Natural killer cell (primary cell): ENCODE measurements at regions of chr1 and their contacts with region 1.

Region 1: GRCh38 chr1:153677718-153678505 is 576 bp upstream of the NPR1 start:
- DNase-seq: peak; percentile 24 to 75
- ATAC-seq: peak; percentile 52 to 75 (median 66)
- H3K4me3 ChIP-seq: peak overlapping the region; percentile 8
- H3K4me3 Mint-ChIP-seq: peak overlapping the region; percentile 85
- H3K27ac ChIP-seq: no peak overlapping the region
- H3K27ac Mint-ChIP-seq: no peak overlapping the region
- H3K4me1 ChIP-seq: peaks cover 20% of the 10 kb centered on the region
- H3K4me1 Mint-ChIP-seq: peaks cover 21 to 26% of the 10 kb centered on the region in 2 donors
- H3K27me3 ChIP-seq: peaks cover 18% of the 10 kb centered on the region
- H3K27me3 Mint-ChIP-seq: peaks cover 38 to 48% of the 10 kb centered on the region in 2 donors
- CTCF ChIP-seq: peak; percentile 70

Region 2: DNA sequence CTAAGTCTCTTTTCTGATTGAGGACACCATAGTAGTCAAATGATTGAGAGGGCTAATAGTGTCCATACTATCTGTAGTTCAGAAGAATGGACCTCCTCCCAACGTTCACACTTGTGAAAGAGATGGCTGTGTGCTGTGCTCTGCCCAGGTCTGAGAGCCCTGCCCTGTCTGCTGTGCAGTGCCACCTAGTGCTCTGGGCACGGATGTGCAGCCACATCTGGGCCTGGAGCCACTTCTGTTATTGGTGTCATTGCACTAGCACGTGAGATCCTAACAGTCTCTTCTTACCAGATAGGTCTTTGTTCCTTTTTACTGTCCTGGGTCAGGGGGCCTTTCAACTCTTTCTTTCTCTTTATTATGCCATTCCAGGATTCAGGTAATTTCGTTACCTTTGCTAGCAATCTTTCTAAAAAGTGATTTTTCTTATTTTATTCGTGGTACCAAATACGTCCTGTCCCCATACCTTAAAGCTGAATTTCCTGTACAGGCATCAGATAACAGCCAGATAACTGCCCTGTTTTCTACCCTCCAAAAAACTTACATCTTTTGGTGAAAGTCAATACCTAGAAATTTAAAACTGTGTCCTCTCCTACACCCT is 71.6 kb after region 1 on chr1:
- intact Hi-C with region 1: loop called (anchors 1 kb)
- DNase-seq: peak; percentile 66 to 86
- ATAC-seq: peak; percentile 100
- H3K4me3 ChIP-seq: no peak overlapping the region
- H3K4me3 Mint-ChIP-seq: no peak overlapping the region
- H3K27ac ChIP-seq: no peak overlapping the region
- H3K27ac Mint-ChIP-seq: peak overlapping the region in 1 of 2 donors; percentile 23
- H3K4me1 ChIP-seq: no peaks in the 10 kb centered on the region
- H3K4me1 Mint-ChIP-seq: peaks cover 6 to 7% of the 10 kb centered on the region in 2 donors
- H3K27me3 ChIP-seq: no peaks in the 10 kb centered on the region
- H3K27me3 Mint-ChIP-seq: no peaks in the 10 kb centered on the region
- CTCF ChIP-seq: peak; percentile 86